Aorta (tissue), 5 donors: ENCODE measurements at regions of chr11 and their contacts with region 1.

Region 1: GRCh38 chr11:124961972-124962609 is 8.1 kb downstream of the CCDC15 start:
- DNase-seq: no peak
- ATAC-seq: peak; percentile 79
- H3K4me3 ChIP-seq: no peak overlapping the region
- H3K27ac ChIP-seq: no peak overlapping the region
- H3K4me1 ChIP-seq: no peaks in the 10 kb centered on the region
- H3K27me3 ChIP-seq: no peaks in the 10 kb centered on the region

Region 2: DNA sequence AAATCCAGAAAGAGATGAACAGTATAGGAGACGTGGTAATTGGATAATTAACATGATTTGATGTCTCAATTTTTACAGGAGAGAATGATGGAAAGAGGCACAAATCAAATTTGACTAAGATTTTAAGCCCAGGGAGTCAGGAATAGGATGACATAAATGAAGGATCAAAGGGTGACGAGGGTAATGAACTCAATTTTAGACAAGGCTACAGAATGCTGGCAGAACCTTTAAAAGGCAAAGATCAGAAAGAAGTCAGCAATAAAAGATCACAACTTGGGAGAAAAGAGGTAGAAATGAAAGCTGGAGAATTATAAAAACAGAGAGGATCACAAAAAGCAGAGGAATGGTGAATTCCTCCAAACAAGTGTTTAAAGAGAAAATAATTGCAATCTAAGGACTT is 405.3 kb before region 1 on chr11:
- intact Hi-C with region 1: no loop called
- DNase-seq: no peak
- ATAC-seq: no peak
- H3K4me3 ChIP-seq: no peak overlapping the region
- H3K27ac ChIP-seq: no peak overlapping the region
- H3K4me1 ChIP-seq: no peaks in the 10 kb centered on the region
- H3K27me3 ChIP-seq: no peaks in the 10 kb centered on the region

Region 3: GRCh38 chr11:125141686-125142535 is 179.8 kb after region 1 on chr11:
- intact Hi-C with region 1: loop called (anchors 5 to 10 kb)
- DNase-seq: peak; percentile 57 to 88
- ATAC-seq: peak; percentile 82
- H3K4me3 ChIP-seq: no peak overlapping the region
- H3K27ac ChIP-seq: no peak overlapping the region
- H3K4me1 ChIP-seq: no peaks in the 10 kb centered on the region
- H3K27me3 ChIP-seq: no peaks in the 10 kb centered on the region

Region 4: GRCh38 chr11:125224391-125225010 is 262.4 kb after region 1 on chr11:
- intact Hi-C with region 1: loop called in 1 of 2 experiments (anchors 10 kb)
- DNase-seq: peak in 1 of 2 donors; percentile 76
- ATAC-seq: no peak
- H3K4me3 ChIP-seq: no peak overlapping the region
- H3K27ac ChIP-seq: no peak overlapping the region
- H3K4me1 ChIP-seq: no peaks in the 10 kb centered on the region
- H3K27me3 ChIP-seq: no peaks in the 10 kb centered on the region

Region 5: DNA sequence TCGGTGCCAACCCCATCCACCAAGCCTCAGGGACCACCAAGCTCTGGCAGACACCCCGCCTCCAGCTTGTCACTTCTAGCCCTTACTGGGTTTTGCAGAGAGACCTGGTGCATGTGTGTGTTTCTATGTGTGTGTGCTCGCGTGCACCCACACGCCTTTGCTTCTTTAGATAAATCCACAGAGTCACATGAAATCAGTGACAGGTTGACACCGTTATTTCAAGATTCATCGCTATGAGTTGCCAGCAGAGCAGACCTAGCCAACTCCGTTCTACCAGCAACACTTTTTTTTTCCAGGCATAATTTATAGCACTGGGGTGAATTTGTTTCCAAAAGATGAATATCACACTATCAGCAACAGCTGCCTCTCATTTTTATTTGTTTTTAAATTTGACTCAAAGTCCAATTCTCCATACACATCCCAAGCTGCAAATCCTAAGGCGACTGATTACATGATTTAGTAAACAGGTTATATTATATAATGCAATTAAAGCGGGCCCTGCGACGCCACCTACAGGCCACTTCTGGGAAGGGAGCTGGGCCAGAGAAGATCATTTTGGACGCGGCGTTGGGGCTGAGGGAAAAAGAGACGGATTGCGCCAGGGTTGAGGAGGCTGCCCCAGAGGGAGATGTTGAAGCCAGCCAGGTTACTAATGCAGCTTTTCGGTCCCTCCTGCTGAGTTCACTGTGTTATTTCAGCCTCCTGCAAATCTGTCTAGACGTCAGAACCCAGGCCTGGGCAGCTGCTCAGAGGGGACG is 383.5 kb after region 1 on chr11:
- intact Hi-C with region 1: loop called in 1 of 2 experiments (anchors 10 kb)
- DNase-seq: peak; percentile 86 to 92
- ATAC-seq: peak; percentile 86
- H3K4me3 ChIP-seq: no peak overlapping the region
- H3K27ac ChIP-seq: no peak overlapping the region
- H3K4me1 ChIP-seq: no peaks in the 10 kb centered on the region
- H3K27me3 ChIP-seq: no peaks in the 10 kb centered on the region

Region 6: DNA sequence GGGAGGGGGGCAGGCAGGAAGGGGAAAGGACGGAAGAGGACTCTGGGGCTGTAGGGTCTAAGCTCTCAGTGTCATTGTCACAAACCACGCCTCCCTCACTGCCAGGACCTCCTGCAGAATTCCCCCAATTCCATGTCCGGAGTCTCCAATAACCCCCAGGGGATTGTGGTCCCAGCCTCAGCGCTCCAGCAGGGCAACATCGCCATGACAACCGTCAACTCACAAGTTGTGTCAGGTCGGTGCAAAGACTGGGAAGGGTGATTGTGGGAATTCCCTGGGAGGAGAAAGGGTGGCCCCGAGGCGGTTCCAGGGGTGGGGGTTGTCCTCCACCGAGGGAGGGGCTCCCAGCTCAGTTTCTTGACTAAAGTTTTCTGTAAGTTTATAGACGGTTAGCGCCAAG is 448.0 kb after region 1 on chr11:
- intact Hi-C with region 1: loop called in 1 of 2 experiments (anchors 5 kb)
- DNase-seq: peak in 1 of 2 donors; percentile 35
- ATAC-seq: no peak
- H3K4me3 ChIP-seq: no peak overlapping the region
- H3K27ac ChIP-seq: no peak overlapping the region
- H3K4me1 ChIP-seq: no peaks in the 10 kb centered on the region
- H3K27me3 ChIP-seq: no peaks in the 10 kb centered on the region